ENCODE measurements at regions of chr16 and their contacts with region 1.

Region 1: DNA sequence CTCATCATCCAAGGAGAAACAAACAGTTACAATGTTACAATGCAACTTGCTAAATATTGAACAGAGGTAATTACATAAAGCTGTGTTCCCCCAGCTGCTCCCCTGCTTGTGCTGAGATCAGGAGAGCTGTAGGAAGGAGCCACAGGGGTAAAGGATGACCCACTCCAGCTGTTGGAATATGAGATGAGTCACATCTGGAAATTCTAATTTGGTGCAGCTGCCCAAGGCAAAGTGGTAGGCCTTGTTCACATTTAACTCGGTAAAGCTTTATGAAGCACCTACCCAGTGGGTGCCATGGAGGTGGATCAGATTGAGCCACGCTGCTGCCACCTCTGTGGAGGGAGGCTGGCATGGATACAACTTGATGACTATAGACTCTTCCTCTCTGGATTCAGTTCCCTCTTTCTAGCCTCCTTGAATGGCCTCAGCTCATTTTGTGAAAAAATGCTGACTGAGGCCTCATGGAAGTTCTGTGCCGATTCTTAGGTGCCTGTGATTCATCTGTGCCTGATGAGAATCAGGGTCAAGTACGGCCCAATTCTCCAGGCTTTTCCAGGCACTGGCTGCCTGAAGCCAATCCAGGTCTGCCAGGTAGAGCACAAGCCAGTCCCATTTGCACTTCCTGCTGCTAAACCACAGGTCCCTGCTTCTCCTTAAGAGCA is 7.4 kb downstream of the ZNF689 start:
- DNase-seq: no peak
- H3K4me3 Mint-ChIP-seq: no peak overlapping the region
- H3K27ac Mint-ChIP-seq: no peak overlapping the region
- H3K4me1 Mint-ChIP-seq: peaks cover 11% of the 10 kb centered on the region
- H3K27me3 Mint-ChIP-seq: no peaks in the 10 kb centered on the region

Region 2: GRCh38 chr16:30526823-30527635 is 75.7 kb before region 1 on chr16:
- CTCF ChIA-PET with region 1: interaction called, 14 read pairs
- POLR2A ChIA-PET with region 1: interaction called, 4 read pairs
- DNase-seq: peak; percentile 97
- H3K4me3 Mint-ChIP-seq: peak overlapping the region; percentile 78
- H3K27ac Mint-ChIP-seq: peak overlapping the region; percentile 67
- H3K4me1 Mint-ChIP-seq: peaks cover 40% of the 10 kb centered on the region
- H3K27me3 Mint-ChIP-seq: no peaks in the 10 kb centered on the region

Region 3: DNA sequence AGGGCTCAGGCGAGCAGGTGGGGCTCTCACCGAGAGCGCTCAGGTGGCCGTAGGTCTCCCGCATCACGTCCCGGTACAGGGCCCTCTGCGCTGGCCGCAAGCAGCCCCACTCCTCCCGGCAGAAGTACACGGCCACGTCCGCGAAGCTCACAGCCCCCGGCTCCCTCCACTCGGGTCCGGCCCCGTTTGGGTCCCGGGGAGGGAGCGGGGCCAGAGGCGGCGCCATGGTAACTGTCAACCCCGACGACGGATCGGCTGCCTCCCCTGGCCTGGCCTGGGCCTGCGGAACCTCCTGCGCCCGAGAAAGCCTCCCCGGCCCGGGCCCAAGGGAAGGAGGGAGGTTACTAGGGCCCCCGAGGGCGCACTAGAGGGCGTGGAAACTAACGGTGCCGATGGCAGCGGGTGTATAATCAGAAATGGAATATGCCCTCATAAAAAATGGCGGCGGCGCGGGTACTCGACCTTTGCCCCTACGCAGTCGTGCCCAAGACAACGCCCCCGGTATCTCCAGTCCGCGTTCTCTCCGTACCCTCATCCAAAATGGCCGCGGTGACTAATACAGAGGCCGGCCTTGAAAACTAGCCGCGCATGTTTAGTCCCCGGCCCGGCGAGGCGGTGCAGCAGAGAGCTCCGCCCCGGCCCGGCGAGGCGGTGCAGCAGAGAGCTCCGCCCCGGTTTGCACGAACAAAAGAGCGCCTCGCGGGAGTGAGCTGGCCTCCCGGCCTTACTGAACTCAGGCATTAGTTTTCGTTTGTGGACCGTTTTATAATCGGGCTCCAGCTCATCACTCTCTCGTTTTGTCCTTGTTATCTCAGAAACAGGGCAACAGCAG is 44.6 kb before region 1 on chr16 and contains the start of gene ZNF764:
- CTCF ChIA-PET with region 1: interaction called, 17 read pairs
- POLR2A ChIA-PET with region 1: interaction called, 3 read pairs
- DNase-seq: peak; percentile 99
- H3K4me3 Mint-ChIP-seq: peak within 1 kb of the TSS; percentile 86
- H3K27ac Mint-ChIP-seq: peak within 1 kb of the TSS; percentile 90
- H3K4me1 Mint-ChIP-seq: peaks cover 51% of the 10 kb centered on the region
- H3K27me3 Mint-ChIP-seq: no peaks in the 10 kb centered on the region
- total RNA-seq, gene ZNF764: 16.0 to 16.8 TPM

Region 4: GRCh38 chr16:30585400-30586189 is 17.2 kb before region 1 on chr16 and contains the start of gene ZNF785:
- CTCF ChIA-PET with region 1: interaction called, 12 read pairs
- POLR2A ChIA-PET with region 1: interaction called, 6 read pairs
- DNase-seq: peak; percentile 96
- H3K4me3 Mint-ChIP-seq: peak within 1 kb of the TSS; percentile 77
- H3K27ac Mint-ChIP-seq: peak within 1 kb of the TSS; percentile 61
- H3K4me1 Mint-ChIP-seq: peaks cover 36% of the 10 kb centered on the region
- H3K27me3 Mint-ChIP-seq: no peaks in the 10 kb centered on the region
- total RNA-seq, gene ZNF785: 12.9 to 13.3 TPM

Region 5: DNA sequence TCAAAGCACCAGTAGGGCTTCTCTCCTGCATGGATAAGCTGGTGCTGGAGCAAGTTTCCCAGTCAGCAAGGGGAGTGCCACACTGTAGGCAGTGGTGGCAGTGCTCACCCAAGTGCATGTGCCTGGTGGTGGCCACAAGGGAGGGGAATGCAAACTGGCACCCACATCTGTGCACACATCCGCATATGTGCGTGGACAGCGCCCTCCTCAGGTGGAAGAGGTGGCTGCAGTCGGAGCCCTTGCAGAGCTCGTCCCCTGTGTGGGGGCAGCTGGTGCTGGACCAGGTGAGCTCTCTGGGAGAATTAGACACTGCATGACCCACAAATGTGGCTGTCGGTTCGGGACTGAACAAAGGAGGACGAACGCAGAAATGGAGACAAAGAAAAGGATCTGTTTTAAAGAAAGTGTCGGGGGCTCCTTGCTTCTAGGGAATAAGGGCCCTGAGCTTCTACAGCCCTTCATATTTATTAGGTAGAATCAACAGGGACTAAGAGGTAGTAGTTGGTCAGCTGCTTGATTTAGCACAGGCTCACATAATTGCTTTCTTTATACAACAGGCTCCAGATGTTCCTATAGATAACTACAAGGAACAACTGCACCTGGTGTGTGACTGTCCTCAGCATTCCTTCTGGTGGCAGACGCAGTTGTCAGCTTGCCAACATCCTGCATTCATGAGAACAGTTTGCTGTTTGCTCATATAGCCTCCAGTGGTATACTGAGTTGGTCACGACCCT is 12.8 kb after region 1 on chr16:
- CTCF ChIA-PET with region 1: interaction called, 38 read pairs
- POLR2A ChIA-PET with region 1: interaction called, 22 read pairs
- DNase-seq: peak; percentile 85
- H3K4me3 Mint-ChIP-seq: no peak overlapping the region
- H3K27ac Mint-ChIP-seq: no peak overlapping the region
- H3K4me1 Mint-ChIP-seq: peaks cover 12% of the 10 kb centered on the region
- H3K27me3 Mint-ChIP-seq: peaks cover 17% of the 10 kb centered on the region

Region 6: GRCh38 chr16:30628627-30629540 is 26.1 kb after region 1 on chr16:
- CTCF ChIA-PET with region 1: interaction called, 16 read pairs
- POLR2A ChIA-PET with region 1: interaction called, 5 read pairs
- DNase-seq: peak; percentile 90
- H3K4me3 Mint-ChIP-seq: peak overlapping the region; percentile 63
- H3K27ac Mint-ChIP-seq: peak overlapping the region; percentile 53
- H3K4me1 Mint-ChIP-seq: peaks cover 16% of the 10 kb centered on the region
- H3K27me3 Mint-ChIP-seq: peaks cover 2% of the 10 kb centered on the region

Region 7: DNA sequence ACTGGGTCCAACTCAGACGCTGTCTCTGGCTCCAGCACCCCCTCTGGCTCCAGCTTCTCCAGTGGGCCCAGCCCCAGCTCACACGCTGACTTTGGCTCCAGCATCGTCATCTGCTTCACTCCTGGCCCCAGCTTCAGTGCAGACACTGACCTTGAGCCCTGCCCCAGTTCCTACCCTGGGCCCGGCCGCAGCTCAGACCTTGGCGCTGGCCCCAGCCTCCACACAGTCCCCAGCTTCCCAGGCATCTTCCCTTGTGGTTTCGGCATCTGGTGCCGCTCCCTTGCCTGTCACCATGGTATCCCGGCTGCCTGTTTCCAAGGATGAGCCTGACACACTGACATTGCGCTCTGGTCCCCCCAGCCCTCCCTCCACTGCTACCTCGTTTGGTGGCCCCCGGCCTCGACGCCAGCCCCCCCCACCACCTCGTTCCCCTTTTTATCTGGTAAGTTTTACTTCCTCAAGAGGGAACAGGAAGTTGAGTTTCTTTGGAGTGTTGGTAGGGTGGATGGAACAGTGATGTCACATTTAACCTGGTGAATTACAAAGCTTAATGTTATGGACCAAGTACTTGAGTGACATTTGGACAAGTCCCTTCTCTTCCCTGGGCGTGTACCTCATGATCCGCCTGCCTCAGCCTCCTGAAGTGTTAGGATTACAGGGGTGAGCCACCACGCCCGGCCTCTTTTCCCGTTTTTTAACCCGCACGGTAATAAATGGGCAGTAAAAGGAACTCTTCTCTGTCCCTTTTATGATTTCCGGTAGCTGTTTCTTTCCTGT is 122.1 kb after region 1 on chr16:
- CTCF ChIA-PET with region 1: no interaction called
- POLR2A ChIA-PET with region 1: no interaction called
- DNase-seq: no peak
- H3K4me3 Mint-ChIP-seq: no peak overlapping the region
- H3K27ac Mint-ChIP-seq: no peak overlapping the region
- H3K4me1 Mint-ChIP-seq: peaks cover 5% of the 10 kb centered on the region
- H3K27me3 Mint-ChIP-seq: no peaks in the 10 kb centered on the region

Measured in activated CD4-positive, alpha-beta memory T cell treated with anti-CD3 and anti-CD28 coated beads, Interleukin-2, amount 10 ng/mL, durations not matched to agents 7 days and 5 days (primary cell).